ENCODE measurements at regions of chr20 and their contacts with region 1.

Region 1: DNA sequence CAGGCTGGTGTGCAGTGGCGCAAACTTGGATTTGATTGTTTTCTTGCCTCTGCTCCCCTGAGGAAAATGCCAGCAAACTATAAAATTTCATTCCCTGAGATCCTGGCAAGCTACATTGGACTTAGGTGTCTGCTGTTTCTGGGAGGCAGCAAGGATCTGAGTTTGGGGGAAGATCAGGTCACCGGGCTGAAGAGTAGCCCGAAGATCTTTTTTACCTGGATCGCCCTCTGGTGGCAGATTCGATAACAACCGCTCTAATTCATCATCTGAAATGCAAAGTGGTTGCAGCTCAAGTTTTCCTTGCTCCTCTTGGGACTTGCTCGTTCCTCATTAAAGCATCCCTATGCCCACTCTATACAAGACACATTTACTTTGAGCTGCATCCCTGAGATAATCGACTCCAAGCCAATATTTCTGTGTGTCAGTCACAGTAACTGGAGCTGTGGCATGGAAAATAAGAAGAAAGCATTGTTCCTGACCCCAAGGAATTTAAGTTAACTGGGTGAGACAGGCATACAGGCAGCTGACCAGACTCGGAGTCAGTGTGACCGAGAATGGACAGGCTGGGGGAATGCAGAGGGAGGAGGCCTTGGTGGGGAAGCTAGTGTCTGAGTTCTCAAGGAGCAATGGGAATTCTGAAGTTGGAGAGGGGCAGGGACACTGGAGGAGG is 131.8 kb upstream of the PROKR2 start:
- DNase-seq: peak; percentile 18
- H3K4me3 Mint-ChIP-seq: no peak overlapping the region
- H3K27ac Mint-ChIP-seq: no peak overlapping the region
- H3K4me1 Mint-ChIP-seq: peaks cover 2% of the 10 kb centered on the region
- H3K27me3 Mint-ChIP-seq: peaks cover 10% of the 10 kb centered on the region

Region 2: GRCh38 chr20:5205348-5206210 is 243.0 kb before region 1 on chr20:
- intact Hi-C with region 1: loop called (anchors 1 kb)
- DNase-seq: peak; percentile 53
- H3K4me3 Mint-ChIP-seq: no peak overlapping the region
- H3K27ac Mint-ChIP-seq: no peak overlapping the region
- H3K4me1 Mint-ChIP-seq: no peaks in the 10 kb centered on the region
- H3K27me3 Mint-ChIP-seq: no peaks in the 10 kb centered on the region

Measured in activated T-helper 2 cell treated with anti-CD3 and anti-CD28 coated beads, Interferon-gamma antibody, Interleukin-2, Interleukin-4, amounts not matched to agents 10 μg/mL and 5 μg/mL and 100 μg/mL, durations not matched to agents 14 hours and 24 hours and 36 hours (primary cell).